IMR-90 (cell line): ENCODE measurements at regions of chr14 and their contacts with region 1.

Region 1: DNA sequence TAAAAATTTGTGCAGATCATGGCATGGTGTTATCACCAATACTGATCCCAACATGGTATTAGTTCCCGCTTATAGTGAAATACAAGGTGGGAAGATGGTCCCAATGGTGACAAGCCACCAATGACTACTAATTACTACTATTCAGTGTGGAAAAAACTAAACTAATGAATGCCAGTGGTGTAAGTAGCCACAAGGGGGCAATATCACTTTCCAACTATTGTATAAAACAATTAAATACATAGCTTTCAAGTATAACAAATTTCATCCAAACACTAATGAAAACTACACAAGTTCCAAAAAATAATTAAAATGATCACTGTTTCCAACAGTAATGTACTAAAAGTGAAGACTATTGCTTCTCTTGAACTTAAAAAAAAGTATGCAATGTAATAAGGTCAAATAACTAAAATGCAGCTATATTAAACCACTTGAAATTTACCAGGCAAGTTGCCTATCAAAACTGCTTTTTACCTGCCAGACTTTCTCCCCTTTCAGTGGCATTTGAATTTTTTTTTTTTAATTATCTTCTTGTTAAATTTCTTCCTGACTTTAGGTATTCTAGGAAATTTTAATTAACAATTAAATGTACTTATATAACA is 58.0 kb downstream of the PAPLN start:
- DNase-seq: peak; percentile 31
- ATAC-seq: no peak
- H3K4me3 ChIP-seq: no peak overlapping the region
- H3K27ac ChIP-seq: no peak overlapping the region
- H3K4me1 ChIP-seq: no peaks in the 10 kb centered on the region
- H3K27me3 ChIP-seq: no peaks in the 10 kb centered on the region
- CTCF ChIP-seq: peak; percentile 69
- POLR2A ChIP-seq: no peak
- RAD21 ChIP-seq: peak; percentile 55

Region 2: GRCh38 chr14:73458151-73458976 is 163.1 kb after region 1 on chr14 and contains the start of gene NUMB:
- CTCF ChIA-PET with region 1: interaction called, 3 read pairs
- POLR2A ChIA-PET with region 1: no interaction called
- dilution Hi-C with region 1: loop called (anchors 25 kb)
- in situ Hi-C with region 1: no loop called
- intact Hi-C with region 1: no loop called
- DNase-seq: peak; percentile 100
- ATAC-seq: peak; percentile 95
- H3K4me3 ChIP-seq: peak within 1 kb of the TSS; percentile 93
- H3K27ac ChIP-seq: peak within 1 kb of the TSS; percentile 92
- H3K4me1 ChIP-seq: peaks cover 13% of the 10 kb centered on the region
- H3K27me3 ChIP-seq: no peaks in the 10 kb centered on the region
- CTCF ChIP-seq: no peak
- POLR2A ChIP-seq: peak; percentile 77
- RAD21 ChIP-seq: no peak
- total RNA-seq, gene NUMB: 41.7 and 45.9 TPM in 2 replicates

Region 3: DNA sequence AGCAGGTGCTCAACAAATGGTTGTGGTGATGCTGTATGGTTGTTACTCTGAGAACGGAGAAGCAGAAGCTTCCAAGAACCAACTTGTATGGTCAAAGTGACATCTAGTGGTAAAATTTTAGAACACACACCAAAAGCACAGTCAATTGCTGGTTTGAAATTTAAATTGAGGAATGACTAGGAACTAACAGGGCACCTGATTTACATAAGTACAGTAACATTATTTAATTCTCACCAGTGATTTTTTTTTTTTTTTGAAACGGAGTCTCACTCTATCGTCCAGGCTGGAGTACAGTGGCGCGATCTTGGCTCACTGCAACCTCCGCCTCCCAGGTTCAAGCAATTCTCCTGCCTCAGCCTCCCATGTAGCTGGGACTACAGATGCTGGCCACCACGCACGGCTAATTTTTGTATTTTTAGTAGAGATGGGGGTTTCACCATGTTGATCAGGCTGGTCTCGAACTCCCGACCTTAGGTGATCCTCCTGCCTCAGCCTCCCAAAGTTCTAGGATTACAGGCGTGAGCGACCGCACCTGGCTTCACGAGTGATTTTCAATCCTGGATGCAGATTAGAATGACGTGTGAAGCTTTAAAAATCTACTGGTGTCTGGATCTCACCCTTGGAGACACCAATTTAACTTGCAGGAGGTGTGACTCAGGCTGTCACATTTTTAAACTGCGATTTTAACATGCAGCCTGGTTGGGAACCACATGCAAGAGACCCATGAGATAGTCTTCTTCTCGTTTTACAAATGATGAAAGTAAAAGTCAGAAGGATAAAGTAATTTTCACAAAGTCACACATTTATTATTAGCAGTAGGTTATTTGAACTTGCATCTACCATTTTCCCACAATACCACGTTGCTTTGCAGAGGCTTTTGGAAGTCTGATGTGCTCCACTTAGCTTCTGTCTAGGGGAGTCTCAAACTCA is 177.2 kb after region 1 on chr14:
- CTCF ChIA-PET with region 1: interaction called, 10 read pairs
- POLR2A ChIA-PET with region 1: no interaction called
- dilution Hi-C with region 1: loop called (anchors 25 kb)
- in situ Hi-C with region 1: loop called (anchors 5 kb)
- intact Hi-C with region 1: loop called (anchors 1 kb)
- DNase-seq: peak; percentile 82
- ATAC-seq: peak; percentile 40
- H3K4me3 ChIP-seq: no peak overlapping the region
- H3K27ac ChIP-seq: no peak overlapping the region
- H3K4me1 ChIP-seq: peaks cover 7% of the 10 kb centered on the region
- H3K27me3 ChIP-seq: no peaks in the 10 kb centered on the region
- CTCF ChIP-seq: peak; percentile 85
- POLR2A ChIP-seq: no peak
- RAD21 ChIP-seq: peak; percentile 95